ENCODE measurements at regions of chrX and their contacts with region 1.

Region 1: GRCh38 chrX:115690511-115691216 is 129.7 kb downstream of the PLS3 start:
- H3K4me3 ChIP-seq: no peak overlapping the region
- H3K27ac ChIP-seq: no peak overlapping the region
- H3K4me1 ChIP-seq: no peaks in the 10 kb centered on the region; the same call in 1 of the 2 replicates
- CTCF ChIP-seq: peak; percentile 68

Region 2: GRCh38 chrX:115650916-115651315 is 39.7 kb before region 1 on chrX:
- CTCF ChIA-PET with region 1: interaction called, 13 read pairs
- POLR2A ChIA-PET with region 1: no interaction called
- H3K4me3 ChIP-seq: no peak overlapping the region
- H3K27ac ChIP-seq: no peak overlapping the region
- H3K4me1 ChIP-seq: no peaks in the 10 kb centered on the region
- CTCF ChIP-seq: peak; percentile 70; the same call in 1 of the 2 replicates

Region 3: GRCh38 chrX:115679460-115679859 is 11.2 kb before region 1 on chrX:
- CTCF ChIA-PET with region 1: interaction called, 30 read pairs
- POLR2A ChIA-PET with region 1: no interaction called
- H3K4me3 ChIP-seq: no peak overlapping the region
- H3K27ac ChIP-seq: no peak overlapping the region
- H3K4me1 ChIP-seq: no peaks in the 10 kb centered on the region
- CTCF ChIP-seq: no peak

Region 4: GRCh38 chrX:115702982-115703381 is 12.3 kb after region 1 on chrX:
- CTCF ChIA-PET with region 1: interaction called, 12 read pairs
- POLR2A ChIA-PET with region 1: no interaction called
- H3K4me3 ChIP-seq: no peak overlapping the region
- H3K27ac ChIP-seq: no peak overlapping the region
- H3K4me1 ChIP-seq: no peaks in the 10 kb centered on the region
- CTCF ChIP-seq: no peak

Measured in HEK293 (cell line).